ENCODE measurements at regions of chr17 and their contacts with region 1.

Region 1: DNA sequence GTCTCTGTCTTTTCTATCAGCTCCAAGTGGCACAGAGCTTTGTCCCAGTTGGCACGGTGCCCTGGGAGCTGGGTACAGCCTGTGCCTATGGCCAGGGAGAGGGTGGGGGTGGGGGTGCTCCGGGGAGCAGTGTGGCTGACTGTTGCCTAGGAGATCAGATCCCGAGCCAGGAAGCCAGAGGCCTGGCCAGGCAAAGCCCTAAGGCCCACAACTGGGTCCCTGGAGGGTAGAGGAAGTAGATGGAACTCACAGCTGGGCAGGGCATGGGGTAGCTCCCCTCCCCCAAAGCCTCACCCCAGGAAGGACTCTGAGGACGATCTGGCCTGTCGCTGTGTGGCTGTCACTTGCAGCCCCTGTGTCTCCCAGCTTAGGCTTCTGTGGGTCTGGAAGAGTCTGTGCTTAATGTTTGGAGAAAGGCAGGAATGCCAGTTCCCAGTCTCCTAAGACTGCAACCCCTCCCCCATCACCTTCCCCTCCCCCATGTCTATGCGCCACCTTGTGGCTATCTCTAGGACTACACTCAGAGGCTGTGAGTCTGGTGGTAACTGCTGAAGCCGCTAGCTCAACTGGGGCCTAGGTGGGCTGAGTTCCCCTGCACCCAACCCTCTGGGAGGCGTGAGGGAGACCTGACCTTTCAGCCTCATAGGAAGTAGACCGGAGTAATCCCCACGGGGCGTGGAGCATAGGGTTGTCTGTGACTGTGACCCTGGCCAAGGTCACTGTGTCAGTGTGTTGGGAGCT is 12.6 kb downstream of the THRA start:
- DNase-seq: peak; percentile 71
- ATAC-seq: peak; percentile 76
- H3K4me3 ChIP-seq: no peak overlapping the region
- H3K27ac ChIP-seq: peak overlapping the region; percentile 16
- H3K4me1 ChIP-seq: peaks cover 49% of the 10 kb centered on the region
- H3K27me3 ChIP-seq: no peaks in the 10 kb centered on the region
- CTCF ChIP-seq: peak; percentile 97
- EP300 ChIP-seq: peak in 1 of 2 experiments; percentile 69; a peak in 1 of 4 replicates
- POLR2A ChIP-seq: no peak
- RAD21 ChIP-seq: peak; percentile 76

Region 2: DNA sequence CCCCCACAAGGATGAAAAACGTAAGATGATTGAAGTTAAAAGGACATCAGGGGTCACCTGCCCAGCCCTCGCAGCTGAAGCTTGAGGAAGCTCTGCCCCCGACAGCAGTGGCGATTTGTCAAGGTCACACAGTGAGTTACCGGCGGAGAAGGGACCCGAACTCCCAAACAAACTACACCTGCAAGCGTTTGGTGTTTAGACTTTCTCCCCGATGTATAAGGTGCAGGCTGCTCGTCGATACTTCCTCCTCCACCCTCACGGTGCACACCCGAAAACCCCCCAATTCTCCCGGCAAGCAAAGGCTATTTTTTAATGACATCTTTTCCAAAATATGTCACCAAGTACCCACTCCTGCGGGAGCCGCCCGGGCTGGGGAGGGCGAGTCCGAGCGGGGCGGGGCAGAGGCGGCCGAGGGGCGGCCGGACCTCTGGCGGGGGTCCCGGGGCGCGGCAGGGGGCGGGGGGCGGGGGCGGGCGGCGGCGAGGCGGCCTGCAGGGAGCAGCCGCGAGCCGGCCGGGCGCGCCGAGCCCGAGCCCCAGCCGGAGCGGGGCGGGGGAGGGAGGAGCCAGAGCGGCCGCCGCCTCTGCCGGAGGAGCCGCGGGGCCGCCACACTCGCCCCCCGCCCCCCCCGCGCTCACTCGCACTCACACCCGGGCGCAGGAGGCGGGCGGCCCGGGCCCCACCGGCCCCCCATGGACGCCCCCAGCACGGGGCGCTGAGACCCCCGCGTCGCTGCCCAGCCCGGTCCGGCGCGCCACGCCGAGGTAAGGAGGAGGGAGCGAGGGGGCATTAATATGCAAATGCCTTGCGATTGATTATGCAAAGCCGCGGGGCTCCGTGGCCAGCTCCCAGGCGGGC is 12.8 kb before region 1 on chr17 and contains the start of gene THRA:
- CTCF ChIA-PET with region 1: interaction called, 25 read pairs
- POLR2A ChIA-PET with region 1: interaction called, 29 read pairs
- in situ Hi-C with region 1: no loop called
- intact Hi-C with region 1: loop called (anchors 1 kb)
- DNase-seq: no peak
- ATAC-seq: peak; percentile 73
- H3K4me3 ChIP-seq: peak within 1 kb of the TSS; percentile 92 to 99 (median 96)
- H3K27ac ChIP-seq: peak within 1 kb of the TSS; percentile 68
- H3K4me1 ChIP-seq: peaks cover 75% of the 10 kb centered on the region
- H3K27me3 ChIP-seq: peaks cover 4 to 28% of the 10 kb centered on the region in 2 experiments; a peak in 4 of 5 replicates
- CTCF ChIP-seq: peak; percentile 4
- EP300 ChIP-seq: no peak
- POLR2A ChIP-seq: no peak
- RAD21 ChIP-seq: peak; percentile 52; the same call in 1 of the 2 replicates
- total RNA-seq, gene THRA: 9.9 and 10.4 TPM in 2 replicates